Posterior vena cava (tissue), 2 donors: ENCODE measurements at regions of chr6 and their contacts with region 1.

Region 1: GRCh38 chr6:1796706-1797529 is 187.2 kb downstream of the FOXC1 start:
- DNase-seq: no peak

Region 2: GRCh38 chr6:1729133-1729749 is 67.7 kb before region 1 on chr6:
- intact Hi-C with region 1: loop called in 1 of 2 experiments (anchors 2 kb)
- DNase-seq: no peak